PC-9 (cell line): ENCODE measurements at regions of chr2 and their contacts with region 1.

Region 1: DNA sequence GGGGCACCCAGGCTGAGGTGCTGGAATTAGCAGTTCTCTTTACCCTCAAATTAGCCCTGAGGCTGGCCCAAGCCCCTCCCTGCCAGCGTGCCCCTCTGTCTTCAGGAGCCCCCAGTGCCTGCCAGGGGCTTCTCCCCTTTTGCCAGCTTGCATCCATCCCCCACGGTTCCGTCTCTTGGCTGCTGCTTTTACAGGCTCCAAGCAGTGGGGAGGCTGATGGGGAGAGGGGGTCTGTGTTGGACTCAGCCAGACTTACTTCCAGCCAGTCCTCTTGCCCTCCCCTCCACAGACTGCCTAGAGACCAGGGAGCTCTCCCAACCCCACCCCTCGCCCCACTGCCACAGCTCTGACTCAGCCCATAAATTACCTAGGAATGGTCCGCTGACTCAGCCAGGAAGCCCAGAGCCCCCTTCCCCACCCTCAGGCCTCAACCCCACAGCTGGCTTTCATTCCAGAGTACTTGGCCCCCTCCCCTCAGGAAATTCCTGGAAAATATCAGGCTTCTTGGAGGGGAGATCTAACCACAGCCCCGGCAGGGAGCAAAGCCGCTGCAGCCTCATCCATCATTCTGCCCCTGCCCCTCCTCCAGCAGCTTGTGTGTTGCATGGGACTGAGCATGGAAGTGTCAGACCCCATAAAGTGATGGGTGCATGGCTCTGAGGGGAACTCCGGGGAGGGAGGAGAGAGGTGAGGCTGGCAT is 184.6 kb downstream of the ZFP36L2 start:
- DNase-seq: peak; percentile 93 to 95
- H3K4me3 ChIP-seq: peak overlapping the region; percentile 19; the same call in 1 of the 2 replicates
- H3K27ac ChIP-seq: peak overlapping the region; percentile 90
- H3K4me1 ChIP-seq: peaks cover 79% of the 10 kb centered on the region
- H3K27me3 ChIP-seq: no peaks in the 10 kb centered on the region
- CTCF ChIP-seq: no peak

Region 2: DNA sequence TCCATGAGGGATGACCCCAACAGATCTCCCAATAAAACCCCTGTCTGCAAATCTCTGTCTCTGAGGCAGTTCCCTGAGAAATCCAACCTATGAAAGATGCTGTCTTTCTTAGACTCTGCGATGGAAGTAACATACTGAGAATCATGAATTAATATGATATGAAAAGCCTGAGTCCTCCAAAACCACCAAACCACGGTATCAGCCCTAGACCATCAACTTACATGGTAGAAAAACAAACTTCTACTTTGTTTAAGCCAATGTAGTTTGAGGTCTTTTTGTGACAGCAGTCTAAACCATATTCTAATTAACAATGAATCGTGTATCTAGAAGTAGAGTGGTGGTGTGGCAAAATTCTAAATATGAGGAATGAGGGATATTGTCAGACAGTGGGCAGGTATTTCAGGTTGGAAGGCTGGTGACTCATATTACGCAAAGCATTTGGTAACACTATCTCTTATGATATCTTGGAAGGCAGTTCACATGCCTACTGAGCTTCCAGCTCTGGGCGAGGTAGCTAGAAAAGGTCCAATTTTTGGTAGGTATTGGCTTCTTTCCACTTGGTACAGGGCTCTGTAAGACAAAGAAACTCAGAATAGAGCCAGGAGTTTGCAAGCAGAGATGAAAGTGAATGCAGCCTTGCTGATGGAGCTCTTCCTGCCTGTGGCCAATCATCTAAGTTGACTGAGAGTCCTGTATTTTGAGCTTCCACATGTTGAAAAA is 31.2 kb before region 1 on chr2:
- CTCF ChIA-PET with region 1: no interaction called
- POLR2A ChIA-PET with region 1: interaction called, 7 read pairs
- intact Hi-C with region 1: loop called (anchors 1 kb)
- DNase-seq: peak; percentile 64 to 96
- H3K4me3 ChIP-seq: peak overlapping the region; percentile 7; the same call in 1 of the 2 replicates
- H3K27ac ChIP-seq: peak overlapping the region; percentile 66
- H3K4me1 ChIP-seq: peaks cover 29% of the 10 kb centered on the region
- H3K27me3 ChIP-seq: no peaks in the 10 kb centered on the region
- CTCF ChIP-seq: no peak

Region 3: DNA sequence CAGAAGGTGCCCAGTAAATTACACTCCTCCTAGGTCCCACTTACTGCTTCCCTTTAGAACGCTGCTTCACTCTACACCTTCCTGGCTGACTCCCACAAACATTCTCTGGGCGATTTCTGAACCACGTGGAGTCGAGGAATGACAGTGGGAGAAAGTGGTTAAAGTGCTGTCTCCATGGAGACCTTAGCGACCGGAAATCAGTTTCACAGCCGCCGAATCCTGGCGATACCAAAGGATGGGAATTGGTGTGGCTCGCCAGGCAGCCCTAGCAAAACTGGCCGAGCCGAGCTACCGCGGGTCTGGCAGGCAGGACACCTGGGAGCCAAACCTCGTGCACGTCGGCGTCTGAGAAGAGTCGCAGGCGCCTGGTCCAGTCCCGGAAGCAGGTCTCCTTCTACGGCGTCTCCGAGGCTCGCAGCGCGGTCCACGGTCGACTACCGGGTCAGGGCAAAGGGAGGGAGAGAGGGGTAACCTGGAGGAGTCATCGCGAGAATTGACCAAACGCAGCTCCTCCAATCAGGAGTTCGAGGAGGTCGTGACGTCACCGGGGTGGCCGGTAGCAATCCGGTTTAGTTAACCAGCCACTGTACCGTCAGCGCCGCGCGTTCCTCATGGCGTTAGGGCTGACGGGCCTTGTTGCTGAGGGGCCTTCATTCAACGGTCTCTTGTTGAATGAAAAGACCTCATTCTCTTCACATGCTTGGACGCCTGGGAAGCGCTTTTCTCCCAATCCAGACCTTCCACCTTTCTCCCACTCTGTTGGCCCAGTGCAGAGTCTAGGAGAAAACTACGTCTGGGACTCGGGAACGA is 554.0 kb after region 1 on chr2 and contains the start of gene THADA:
- CTCF ChIA-PET with region 1: interaction called, 11 read pairs
- POLR2A ChIA-PET with region 1: no interaction called
- intact Hi-C with region 1: no loop called
- DNase-seq: peak; percentile 98 to 99
- H3K4me3 ChIP-seq: peak within 1 kb of the TSS; percentile 85
- H3K27ac ChIP-seq: peak within 1 kb of the TSS; percentile 87
- H3K4me1 ChIP-seq: peaks cover 12% of the 10 kb centered on the region
- H3K27me3 ChIP-seq: no peaks in the 10 kb centered on the region
- CTCF ChIP-seq: no peak
- total RNA-seq, gene THADA: 28.1 and 30.5 TPM in 2 replicates